H1 (cell line): ENCODE measurements at regions of chr15 and their contacts with region 1.

Region 1: DNA sequence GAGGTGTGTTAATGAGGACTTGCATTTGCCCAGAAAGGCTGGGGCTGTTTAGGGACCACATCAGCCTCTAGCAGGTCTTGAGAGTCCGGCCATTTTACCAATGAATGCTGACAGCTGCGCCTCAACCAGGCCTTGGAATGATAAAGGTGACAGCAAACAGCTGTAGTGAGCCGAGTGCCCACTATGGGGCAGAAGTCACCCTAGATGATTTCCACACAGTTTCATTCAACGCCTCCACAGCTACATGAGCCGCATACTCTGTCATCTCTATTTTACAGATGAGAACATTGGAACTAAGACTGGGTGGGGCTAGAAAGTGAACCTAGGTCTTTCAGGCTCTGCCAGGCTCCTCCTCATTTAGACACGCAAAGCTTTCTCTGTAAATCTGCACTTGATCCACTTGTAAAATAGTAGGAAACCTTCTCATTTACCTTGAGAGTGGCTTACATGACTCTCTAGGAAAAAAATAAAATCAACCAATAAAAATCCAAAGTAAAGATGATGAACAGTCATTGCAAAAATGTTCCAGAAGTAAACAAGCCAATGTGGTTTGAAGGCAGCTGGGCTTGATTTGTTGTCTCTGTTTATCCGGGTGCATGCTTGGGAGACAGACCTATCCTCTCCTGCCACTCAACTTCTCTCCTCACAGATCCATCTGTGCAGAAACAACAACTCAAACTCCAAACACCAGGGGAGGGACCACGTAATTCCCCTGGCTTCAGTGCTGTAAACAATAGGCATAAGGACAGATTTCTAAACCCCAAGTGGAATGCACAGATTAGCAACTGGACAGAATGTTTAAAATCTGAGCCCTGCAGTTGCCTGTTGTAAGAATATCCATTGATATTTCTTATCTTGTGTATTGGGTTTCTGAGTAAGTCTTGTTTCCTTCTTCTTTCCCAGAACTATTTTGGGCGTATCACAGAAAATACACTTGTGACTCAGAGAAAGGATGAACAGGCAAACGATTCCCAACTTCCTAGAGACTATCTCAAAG is 31.5 kb upstream of the LDHAL6B start:
- DNase-seq: peak; percentile 17 to 63
- H3K4me3 ChIP-seq: no peak overlapping the region
- H3K27ac ChIP-seq: no peak overlapping the region
- H3K4me1 ChIP-seq: no peaks in the 10 kb centered on the region
- H3K27me3 ChIP-seq: no peaks in the 10 kb centered on the region
- CTCF ChIP-seq: peak; percentile 62 to 78 (median 65)
- EP300 ChIP-seq: no peak
- POLR2A ChIP-seq: 0 out of 3 replicates have a peak, but pooled peaks of 1 of the 2 experiments have one; percentile 16
- RAD21 ChIP-seq: peak; percentile 70 to 72

Region 2: DNA sequence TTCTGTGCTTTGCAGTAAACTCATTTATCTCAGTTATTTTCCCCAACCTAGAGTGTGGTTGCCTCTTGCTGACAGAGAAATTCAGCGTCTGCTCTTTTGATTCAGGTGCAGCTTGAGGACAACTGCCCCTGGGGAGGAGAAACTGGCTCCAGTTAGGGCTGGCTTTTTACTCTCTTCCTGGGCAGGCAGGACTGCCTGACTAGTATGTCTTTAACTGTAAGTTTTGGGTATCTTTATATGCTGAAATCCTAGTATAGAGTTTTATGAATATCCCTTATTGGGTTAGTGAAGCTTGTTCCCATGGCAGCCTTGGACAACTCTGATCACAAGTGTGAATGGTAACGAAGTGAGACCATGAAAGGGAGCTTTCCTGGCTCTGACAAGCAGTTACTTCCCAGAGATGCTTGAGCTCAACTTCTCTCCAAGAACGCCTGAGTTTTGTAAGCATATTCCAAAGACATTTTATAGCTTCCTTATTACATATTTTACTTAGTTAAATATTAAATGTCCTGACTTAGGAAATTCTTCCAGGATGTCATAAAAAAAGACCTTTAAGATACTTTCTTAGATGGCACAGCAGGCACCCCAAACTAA is 43.1 kb before region 1 on chr15:
- CTCF ChIA-PET with region 1: no interaction called
- POLR2A ChIA-PET with region 1: no interaction called
- DNase-seq: no peak
- H3K4me3 ChIP-seq: no peak overlapping the region
- H3K27ac ChIP-seq: no peak overlapping the region
- H3K4me1 ChIP-seq: no peaks in the 10 kb centered on the region; a peak in 1 of 7 replicates
- H3K27me3 ChIP-seq: no peaks in the 10 kb centered on the region
- CTCF ChIP-seq: no peak
- EP300 ChIP-seq: no peak
- POLR2A ChIP-seq: no peak
- RAD21 ChIP-seq: no peak

Region 3: DNA sequence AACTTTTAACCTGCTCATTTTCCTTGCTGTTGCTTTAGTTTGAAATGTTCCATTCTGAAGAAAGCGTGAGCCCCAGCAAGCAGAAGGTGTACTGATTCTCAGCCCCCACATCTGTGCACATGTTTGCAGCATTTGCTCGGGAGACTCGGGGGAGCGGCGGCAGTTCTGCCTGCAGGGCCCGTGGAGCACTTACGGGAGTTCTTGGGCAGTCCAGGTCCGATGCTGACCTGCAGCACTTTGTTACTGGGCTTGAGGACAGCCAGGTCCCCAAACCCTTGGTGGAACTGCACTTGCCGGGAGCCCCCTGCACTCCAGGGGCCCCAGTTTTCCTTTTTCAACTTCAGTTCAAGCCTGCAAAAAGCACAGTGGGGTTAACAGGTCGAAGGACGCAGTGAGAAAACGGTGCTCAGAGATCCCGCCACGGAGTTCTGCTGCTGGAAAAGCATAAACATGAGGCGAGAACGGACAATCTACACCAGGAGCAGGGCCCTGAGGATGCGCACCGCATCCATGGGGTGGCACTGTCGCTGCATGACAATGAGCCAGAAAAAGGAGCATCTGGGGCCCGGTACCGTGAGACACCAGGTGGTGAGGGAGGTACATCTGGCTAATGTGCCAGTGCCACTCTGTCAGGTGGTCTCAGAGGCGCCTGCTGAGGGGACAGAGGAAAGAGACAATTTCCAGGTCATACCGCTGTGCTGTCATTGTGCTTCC is 14.1 kb before region 1 on chr15:
- CTCF ChIA-PET with region 1: interaction called, 16 read pairs
- POLR2A ChIA-PET with region 1: no interaction called
- DNase-seq: peak in 1 of 2 experiments; percentile 73
- H3K4me3 ChIP-seq: no peak overlapping the region
- H3K27ac ChIP-seq: no peak overlapping the region
- H3K4me1 ChIP-seq: no peaks in the 10 kb centered on the region; a peak in 2 of 7 replicates
- H3K27me3 ChIP-seq: no peaks in the 10 kb centered on the region
- CTCF ChIP-seq: peak; percentile 78 to 82 (median 80)
- EP300 ChIP-seq: no peak
- POLR2A ChIP-seq: no peak
- RAD21 ChIP-seq: peak; percentile 84 to 88

Region 4: GRCh38 chr15:59185725-59186124 is 10.6 kb after region 1 on chr15:
- CTCF ChIA-PET with region 1: interaction called, 14 read pairs
- POLR2A ChIA-PET with region 1: no interaction called
- DNase-seq: no peak
- H3K4me3 ChIP-seq: no peak overlapping the region
- H3K27ac ChIP-seq: no peak overlapping the region
- H3K4me1 ChIP-seq: no peaks in the 10 kb centered on the region
- H3K27me3 ChIP-seq: no peaks in the 10 kb centered on the region
- CTCF ChIP-seq: peak in 2 of 3 experiments; percentile 12 to 33; a peak in 2 of 4 replicates
- EP300 ChIP-seq: no peak
- POLR2A ChIP-seq: no peak
- RAD21 ChIP-seq: peak; percentile 10 to 30; a peak in 1 of 4 replicates